ENCODE measurements at regions of chr2 and their contacts with region 1.

Region 1: DNA sequence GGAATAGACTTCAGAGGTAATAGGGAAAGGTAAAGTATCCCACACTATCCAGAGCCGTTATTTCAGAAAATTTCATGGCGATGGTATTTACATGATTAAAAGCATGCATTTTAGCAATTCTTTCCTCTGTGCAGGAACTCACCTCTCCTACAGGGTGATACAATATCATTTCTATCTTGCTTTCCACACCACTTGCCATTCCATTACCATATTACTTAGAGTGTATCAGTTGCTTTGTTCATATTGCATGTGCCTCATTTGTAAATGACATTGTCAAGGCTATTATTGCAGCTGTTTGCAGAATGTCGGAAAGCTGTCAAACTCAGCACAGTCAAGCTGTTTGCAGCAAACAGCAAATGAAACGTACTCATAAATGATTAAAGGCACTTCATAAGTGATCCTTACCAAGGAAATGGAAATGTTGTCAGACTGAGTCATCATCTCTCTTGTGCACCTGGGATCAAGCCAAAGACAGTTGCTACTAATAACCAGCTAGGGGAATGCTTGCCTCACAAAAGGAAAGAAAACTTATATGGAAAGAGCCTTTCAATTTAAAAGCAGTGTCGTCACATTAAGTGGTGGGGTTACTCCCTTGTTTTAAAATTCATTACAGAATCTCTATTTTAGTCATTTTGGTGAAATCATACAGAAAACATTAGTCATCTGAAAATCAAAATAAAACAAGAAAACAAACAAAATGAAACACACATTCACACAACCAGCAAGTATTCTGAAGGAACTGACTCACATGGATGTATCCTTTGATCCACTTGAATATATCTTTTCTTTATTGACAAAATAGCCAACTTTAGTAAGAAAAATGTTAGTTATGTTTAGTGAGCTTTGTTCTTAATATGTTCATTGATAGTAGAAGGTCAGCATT is 1064.1 kb upstream of the CNTNAP5 start:
- DNase-seq: peak; percentile 96
- ATAC-seq: peak; percentile 89
- H3K4me3 ChIP-seq: peak overlapping the region; percentile 54
- H3K27ac ChIP-seq: peak overlapping the region; percentile 85
- H3K4me1 ChIP-seq: peaks cover 27% of the 10 kb centered on the region
- H3K27me3 ChIP-seq: no peaks in the 10 kb centered on the region
- CTCF ChIP-seq: peak; percentile 42; the same call in 1 of the 2 replicates

Region 2: GRCh38 chr2:122643725-122644329 is 317.2 kb before region 1 on chr2:
- CTCF ChIA-PET with region 1: no interaction called
- POLR2A ChIA-PET with region 1: no interaction called
- intact Hi-C with region 1: loop called (anchors 2 kb)
- DNase-seq: peak; percentile 97
- ATAC-seq: peak; percentile 95
- H3K4me3 ChIP-seq: no peak overlapping the region
- H3K27ac ChIP-seq: peak overlapping the region; percentile 64
- H3K4me1 ChIP-seq: peaks cover 23% of the 10 kb centered on the region
- H3K27me3 ChIP-seq: no peaks in the 10 kb centered on the region
- CTCF ChIP-seq: no peak

Region 3: DNA sequence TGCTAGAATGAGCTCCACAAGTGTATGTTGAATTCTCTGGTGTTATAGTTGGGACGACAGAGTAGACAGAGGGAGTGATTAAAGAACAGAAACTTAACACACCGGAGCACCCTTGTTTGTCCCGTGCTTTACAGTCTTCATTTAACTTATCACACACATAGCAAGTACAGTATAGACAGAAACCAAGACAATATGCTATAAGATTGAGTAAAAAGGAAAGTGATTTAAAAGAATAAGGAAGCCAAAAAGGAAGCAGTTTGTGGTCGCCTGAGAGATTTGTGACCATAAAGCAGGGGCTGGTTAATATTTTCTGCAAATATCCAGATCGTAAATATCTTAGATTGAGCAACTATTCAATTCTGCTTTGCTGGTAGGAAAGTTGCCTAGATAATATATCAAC is 77.2 kb before region 1 on chr2:
- CTCF ChIA-PET with region 1: no interaction called
- POLR2A ChIA-PET with region 1: no interaction called
- intact Hi-C with region 1: loop called (anchors 1 kb)
- DNase-seq: no peak
- ATAC-seq: no peak
- H3K4me3 ChIP-seq: no peak overlapping the region
- H3K27ac ChIP-seq: peak overlapping the region; percentile 87
- H3K4me1 ChIP-seq: peaks cover 18% of the 10 kb centered on the region
- H3K27me3 ChIP-seq: no peaks in the 10 kb centered on the region
- CTCF ChIP-seq: no peak

Region 4: GRCh38 chr2:123364243-123364896 is 403.4 kb after region 1 on chr2:
- CTCF ChIA-PET with region 1: no interaction called
- POLR2A ChIA-PET with region 1: no interaction called
- intact Hi-C with region 1: loop called (anchors 1 kb)
- DNase-seq: no peak
- ATAC-seq: peak; percentile 8; the same call in 1 of the 2 replicates
- H3K4me3 ChIP-seq: no peak overlapping the region
- H3K27ac ChIP-seq: peak overlapping the region; percentile 14; the same call in 1 of the 2 replicates
- H3K4me1 ChIP-seq: peaks cover 19% of the 10 kb centered on the region
- H3K27me3 ChIP-seq: no peaks in the 10 kb centered on the region
- CTCF ChIP-seq: no peak

Region 5: DNA sequence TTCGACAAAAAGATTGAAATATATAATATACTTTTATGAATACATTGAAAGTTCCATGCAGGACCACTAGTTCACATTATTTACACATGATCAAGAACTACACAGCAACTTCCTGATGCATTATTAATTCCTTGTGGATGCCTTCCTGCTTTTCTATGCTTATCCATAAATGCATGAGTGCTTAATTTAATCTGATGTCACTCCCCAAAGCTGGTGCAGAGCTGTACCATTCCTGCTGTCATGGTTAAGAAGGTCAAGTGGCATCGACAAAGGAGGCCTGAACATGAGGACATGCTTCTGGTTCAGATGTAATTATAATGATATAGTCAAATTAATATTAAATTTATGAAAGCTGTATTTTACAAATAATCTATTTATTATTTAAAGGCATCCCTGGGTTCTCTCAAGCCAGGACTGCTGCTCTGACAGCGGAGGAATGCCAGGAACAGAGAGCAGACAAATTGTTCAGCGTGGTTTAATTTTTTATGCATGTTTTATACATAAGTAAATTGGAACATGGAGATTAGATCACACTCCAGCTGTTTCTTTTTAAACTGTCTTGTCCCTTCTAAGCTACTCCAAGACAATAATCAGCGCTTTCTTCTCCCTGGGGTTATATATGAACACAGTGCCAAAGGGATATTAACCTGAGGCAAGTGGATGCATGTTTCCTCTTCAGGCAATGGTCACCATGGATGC is 756.8 kb after region 1 on chr2:
- CTCF ChIA-PET with region 1: no interaction called
- POLR2A ChIA-PET with region 1: no interaction called
- intact Hi-C with region 1: loop called (anchors 5 kb)
- DNase-seq: no peak
- ATAC-seq: no peak
- H3K4me3 ChIP-seq: no peak overlapping the region
- H3K27ac ChIP-seq: no peak overlapping the region
- H3K4me1 ChIP-seq: peaks cover 37% of the 10 kb centered on the region
- H3K27me3 ChIP-seq: no peaks in the 10 kb centered on the region
- CTCF ChIP-seq: no peak

Region 6: GRCh38 chr2:124018890-124019289 is 1057.9 kb after region 1 on chr2:
- CTCF ChIA-PET with region 1: no interaction called
- POLR2A ChIA-PET with region 1: no interaction called
- intact Hi-C with region 1: loop called (anchors 2 kb)
- DNase-seq: peak; percentile 36
- ATAC-seq: no peak; the same call in 1 of the 2 replicates
- H3K4me3 ChIP-seq: no peak overlapping the region
- H3K27ac ChIP-seq: no peak overlapping the region
- H3K4me1 ChIP-seq: no peaks in the 10 kb centered on the region
- H3K27me3 ChIP-seq: no peaks in the 10 kb centered on the region
- CTCF ChIP-seq: peak; percentile 67

Measured in PC-3 (cell line).